ENCODE measurements at regions of chr15 and their contacts with region 1.

Region 1: DNA sequence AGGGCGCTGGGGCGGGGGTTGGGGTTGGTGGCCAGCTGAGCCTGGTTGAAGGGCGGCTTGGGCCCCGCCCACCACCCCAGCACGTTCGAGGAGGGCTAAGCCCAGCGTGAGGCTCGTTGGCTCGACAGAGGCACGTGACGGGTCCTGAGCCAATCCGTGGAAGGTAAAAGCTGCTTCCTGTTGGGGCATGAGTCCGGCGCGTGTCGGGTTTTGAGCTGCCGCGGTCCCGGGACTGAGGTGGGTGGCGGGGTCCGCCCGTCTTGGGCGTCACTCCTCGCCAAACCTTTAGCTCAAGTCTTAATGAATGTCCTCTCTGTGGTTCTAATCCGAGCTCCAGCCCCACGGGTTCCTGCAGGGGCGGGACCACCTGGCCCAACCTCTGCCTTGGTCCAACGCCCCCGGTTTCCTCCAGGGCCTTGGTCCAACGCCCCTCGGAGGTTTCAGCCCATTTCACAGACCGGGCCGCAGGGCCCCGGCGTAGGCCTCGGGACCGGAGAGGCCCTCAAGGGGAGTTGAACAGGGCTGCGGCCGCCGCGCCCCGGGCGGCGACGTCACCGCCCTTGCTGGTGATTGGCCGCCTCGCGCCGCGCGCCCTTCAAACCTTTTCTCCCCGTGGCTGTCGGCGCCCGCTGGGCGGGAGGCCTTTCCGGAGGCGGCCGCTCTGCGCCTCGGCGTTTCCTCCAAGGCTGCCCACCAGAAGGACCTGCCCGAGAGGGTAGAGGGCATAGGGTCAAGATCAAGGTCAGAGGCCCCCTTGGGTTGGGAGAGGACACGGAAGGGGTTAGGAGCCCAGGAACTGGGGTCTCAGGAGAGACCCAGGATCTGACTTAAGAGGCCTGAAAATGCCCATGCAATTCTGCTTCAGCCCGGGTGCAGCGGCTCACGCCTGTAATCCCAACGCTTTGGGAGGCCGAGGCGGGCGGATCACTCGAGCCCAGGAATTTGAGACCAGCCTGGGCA is at the start of gene RCCD1:
- DNase-seq: peak; percentile 63 to 94 (median 87)
- ATAC-seq: peak; percentile 94
- H3K4me3 ChIP-seq: peak within 1 kb of the TSS; percentile 87 to 97
- H3K4me3 Mint-ChIP-seq: peak within 1 kb of the TSS; percentile 87
- H3K27ac ChIP-seq: peak within 1 kb of the TSS; percentile 90 to 97
- H3K27ac Mint-ChIP-seq: peak within 1 kb of the TSS; percentile 92
- H3K4me1 ChIP-seq: peaks cover 16% of the 10 kb centered on the region
- H3K4me1 Mint-ChIP-seq: peaks cover 10% of the 10 kb centered on the region
- H3K27me3 ChIP-seq: no peaks in the 10 kb centered on the region
- H3K27me3 Mint-ChIP-seq: no peaks in the 10 kb centered on the region
- CTCF ChIP-seq: no peak
- total RNA-seq, gene RCCD1: 3.9 to 4.1 TPM

Region 2: DNA sequence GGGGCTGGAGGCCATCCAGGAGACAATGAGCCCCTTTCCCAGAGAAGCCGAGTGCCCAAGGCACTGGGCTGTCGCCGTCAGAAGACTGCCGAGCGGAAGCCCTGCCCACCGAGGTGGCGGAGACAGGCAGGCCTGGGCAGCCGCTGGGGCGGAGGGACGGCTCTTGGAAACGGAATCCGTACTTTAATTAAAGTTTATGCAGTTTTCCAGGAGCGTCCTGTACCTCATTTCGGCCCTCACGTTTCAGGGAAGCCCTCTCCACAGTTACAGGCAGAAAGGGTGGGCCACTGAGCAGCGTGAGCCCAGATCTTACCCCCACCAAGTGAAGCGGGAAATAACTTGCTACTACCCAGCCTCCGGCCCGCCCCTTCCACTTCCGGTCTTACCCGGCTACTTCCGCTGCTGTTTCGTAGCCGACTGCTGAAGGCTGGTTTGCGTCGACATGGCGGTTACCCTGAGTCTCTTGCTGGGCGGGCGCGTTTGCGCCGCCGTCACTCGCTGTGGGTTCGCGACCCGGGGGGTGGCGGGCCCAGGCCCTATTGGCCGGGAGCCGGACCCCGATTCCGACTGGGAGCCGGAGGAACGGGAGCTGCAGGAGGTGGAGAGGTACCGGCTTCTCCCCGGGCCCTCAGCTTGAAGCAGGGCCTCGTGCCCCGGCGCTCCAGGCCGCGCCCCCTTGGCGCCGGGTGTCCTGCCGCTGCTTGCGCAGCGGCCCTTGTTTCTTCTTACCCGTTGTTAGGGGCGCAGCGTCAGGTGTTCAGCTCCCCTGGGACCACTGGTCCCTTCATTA is 689.5 kb before region 1 on chr15 and contains the start of gene NGRN:
- CTCF ChIA-PET with region 1: no interaction called
- POLR2A ChIA-PET with region 1: no interaction called
- intact Hi-C with region 1: loop called in 1 of 2 experiments (anchors 1 kb)
- DNase-seq: peak; percentile 84 to 95 (median 93)
- ATAC-seq: peak; percentile 81
- H3K4me3 ChIP-seq: peak within 1 kb of the TSS; percentile 79 to 86
- H3K4me3 Mint-ChIP-seq: peak within 1 kb of the TSS; percentile 94
- H3K27ac ChIP-seq: peak within 1 kb of the TSS; percentile 95 to 98
- H3K27ac Mint-ChIP-seq: peak within 1 kb of the TSS; percentile 98
- H3K4me1 ChIP-seq: peaks cover 43% of the 10 kb centered on the region
- H3K4me1 Mint-ChIP-seq: peaks cover 51% of the 10 kb centered on the region
- H3K27me3 ChIP-seq: no peaks in the 10 kb centered on the region
- H3K27me3 Mint-ChIP-seq: no peaks in the 10 kb centered on the region
- CTCF ChIP-seq: no peak
- total RNA-seq, gene NGRN: 57.8 to 62.0 TPM

Region 3: GRCh38 chr15:90970274-90970673 is 15.3 kb after region 1 on chr15:
- CTCF ChIA-PET with region 1: interaction called, 51 read pairs
- POLR2A ChIA-PET with region 1: no interaction called
- intact Hi-C with region 1: no loop called
- DNase-seq: no peak
- ATAC-seq: no peak
- H3K4me3 ChIP-seq: no peak overlapping the region
- H3K4me3 Mint-ChIP-seq: no peak overlapping the region
- H3K27ac ChIP-seq: no peak overlapping the region
- H3K27ac Mint-ChIP-seq: no peak overlapping the region
- H3K4me1 ChIP-seq: no peaks in the 10 kb centered on the region
- H3K4me1 Mint-ChIP-seq: no peaks in the 10 kb centered on the region
- H3K27me3 ChIP-seq: no peaks in the 10 kb centered on the region
- H3K27me3 Mint-ChIP-seq: no peaks in the 10 kb centered on the region
- CTCF ChIP-seq: no peak

Region 4: GRCh38 chr15:91022075-91022835 is 67.3 kb after region 1 on chr15 and contains the start of gene VPS33B:
- CTCF ChIA-PET with region 1: interaction called, 9 read pairs
- POLR2A ChIA-PET with region 1: no interaction called
- intact Hi-C with region 1: loop called (anchors 2 kb)
- DNase-seq: peak; percentile 42 to 92 (median 80)
- ATAC-seq: peak; percentile 89
- H3K4me3 ChIP-seq: peak within 1 kb of the TSS; percentile 85 to 97
- H3K4me3 Mint-ChIP-seq: peak within 1 kb of the TSS; percentile 90
- H3K27ac ChIP-seq: peak within 1 kb of the TSS; percentile 52 to 80
- H3K27ac Mint-ChIP-seq: peak within 1 kb of the TSS; percentile 89
- H3K4me1 ChIP-seq: peaks cover 11% of the 10 kb centered on the region
- H3K4me1 Mint-ChIP-seq: peaks cover 38% of the 10 kb centered on the region
- H3K27me3 ChIP-seq: no peaks in the 10 kb centered on the region
- H3K27me3 Mint-ChIP-seq: no peaks in the 10 kb centered on the region
- CTCF ChIP-seq: no peak
- total RNA-seq, gene VPS33B: 30.1 to 33.0 TPM

Region 5: GRCh38 chr15:91049378-91050127 is 94.6 kb after region 1 on chr15:
- CTCF ChIA-PET with region 1: interaction called, 38 read pairs
- POLR2A ChIA-PET with region 1: no interaction called
- intact Hi-C with region 1: loop called (anchors 1 kb)
- DNase-seq: peak in 8 of 9 experiments; percentile 11 to 70 (median 30)
- ATAC-seq: peak; percentile 71
- H3K4me3 ChIP-seq: no peak overlapping the region
- H3K4me3 Mint-ChIP-seq: no peak overlapping the region
- H3K27ac ChIP-seq: no peak overlapping the region
- H3K27ac Mint-ChIP-seq: no peak overlapping the region
- H3K4me1 ChIP-seq: peaks cover 16% of the 10 kb centered on the region
- H3K4me1 Mint-ChIP-seq: peaks cover 21% of the 10 kb centered on the region
- H3K27me3 ChIP-seq: no peaks in the 10 kb centered on the region
- H3K27me3 Mint-ChIP-seq: peaks cover 17% of the 10 kb centered on the region
- CTCF ChIP-seq: peak; percentile 57

Measured in CD8-positive, alpha-beta T cell (primary cell).